ENCODE measurements at regions of chr16 and their contacts with region 1.

Region 1: DNA sequence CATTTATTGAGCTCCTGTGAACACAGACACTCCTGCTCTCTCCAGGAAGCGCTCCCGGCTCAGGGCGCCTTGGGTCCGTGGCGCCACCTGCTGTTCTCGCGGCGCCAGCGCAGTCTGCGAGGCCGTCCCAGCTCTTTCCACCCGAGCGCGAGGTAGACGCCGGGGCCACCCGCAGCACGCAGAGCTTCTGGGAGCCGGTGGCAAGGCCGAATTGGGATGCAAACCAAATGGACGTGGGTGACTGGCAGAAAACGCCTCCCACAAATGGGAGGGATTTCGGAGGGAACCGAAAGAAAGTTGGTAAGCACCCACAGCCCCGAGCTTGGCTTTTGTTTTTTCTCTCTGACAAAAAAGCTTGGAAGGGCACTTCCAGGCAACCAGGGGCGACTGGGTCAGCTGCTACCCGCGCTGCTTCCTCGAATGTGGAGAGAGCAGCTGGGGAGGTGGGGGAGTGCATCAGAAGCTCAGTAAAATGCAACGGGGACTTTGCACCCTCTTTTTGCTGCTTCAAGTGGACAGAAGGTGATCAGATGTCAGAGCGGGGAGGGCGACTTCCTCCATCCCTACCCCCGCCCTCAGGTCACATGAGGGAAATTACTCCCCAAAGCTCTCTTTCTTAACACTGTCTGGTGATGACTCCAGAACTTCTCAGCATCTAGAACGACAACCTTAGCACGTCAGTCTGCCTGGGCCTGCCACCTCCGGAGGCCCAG is 13.5 kb upstream of the N4BP1 start:
- DNase-seq: peak; percentile 79 to 87
- ATAC-seq: peak; percentile 94 to 98 (median 95)
- H3K4me3 ChIP-seq: peak overlapping the region; percentile 9 to 65 (median 52)
- H3K27ac ChIP-seq: peak overlapping the region in 9 of 10 donors; percentile 50 to 89 (median 73)
- H3K4me1 ChIP-seq: peaks cover 2 to 51% (median 36%) of the 10 kb centered on the region in 9 donors
- H3K27me3 ChIP-seq: no peaks in the 10 kb centered on the region
- CTCF ChIP-seq: peak; percentile 97 to 100 (median 99)

Region 2: DNA sequence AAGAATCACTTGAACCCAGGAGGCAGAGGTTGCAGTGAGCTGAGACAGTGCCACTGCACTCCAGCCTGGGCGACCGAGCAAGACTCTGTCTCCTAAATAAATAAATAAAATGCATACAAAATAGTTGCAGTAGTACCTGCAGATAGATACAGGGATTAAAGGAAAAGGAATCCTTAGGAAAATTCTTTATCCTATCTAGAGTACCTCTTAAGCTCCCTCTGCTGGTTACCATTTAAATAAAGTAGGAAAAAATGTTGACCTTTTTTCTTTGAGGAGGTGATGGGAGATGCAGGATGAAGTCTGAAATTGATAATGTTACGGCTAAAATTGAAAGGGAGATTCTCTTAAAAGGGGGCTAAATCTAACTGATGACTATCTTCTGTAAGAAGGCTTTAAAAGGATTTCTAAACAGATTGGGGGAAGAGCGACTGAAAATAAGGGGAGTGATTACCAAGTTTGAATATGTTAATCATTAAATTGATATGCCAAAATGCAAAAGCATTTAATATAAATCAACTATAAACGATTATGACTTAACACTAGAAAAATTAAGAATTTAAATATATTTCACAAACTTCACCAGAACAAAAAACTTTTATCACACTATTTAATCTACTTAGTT is 1821.9 kb before region 1 on chr16:
- intact Hi-C with region 1: no loop called
- DNase-seq: no peak
- ATAC-seq: peak in 3 of 8 donors; percentile 26 to 55 (median 53)
- H3K4me3 ChIP-seq: no peak overlapping the region
- H3K27ac ChIP-seq: no peak overlapping the region
- H3K4me1 ChIP-seq: no peaks in the 10 kb centered on the region
- H3K27me3 ChIP-seq: no peaks in the 10 kb centered on the region
- CTCF ChIP-seq: peak in 8 of 9 donors; percentile 14 to 66 (median 51)

Region 3: GRCh38 chr16:48231727-48232492 is 391.6 kb before region 1 on chr16:
- intact Hi-C with region 1: loop called in 3 of 10 experiments (anchors 10 kb)
- DNase-seq: peak in 1 of 2 donors; percentile 10
- ATAC-seq: peak in 5 of 8 donors; percentile 28 to 61 (median 41)
- H3K4me3 ChIP-seq: no peak overlapping the region
- H3K27ac ChIP-seq: no peak overlapping the region
- H3K4me1 ChIP-seq: peaks cover 0 to 8% (median 0%) of the 10 kb centered on the region in 9 donors
- H3K27me3 ChIP-seq: no peaks in the 10 kb centered on the region
- CTCF ChIP-seq: peak in 7 of 9 donors; percentile 27 to 53 (median 36)

Region 4: DNA sequence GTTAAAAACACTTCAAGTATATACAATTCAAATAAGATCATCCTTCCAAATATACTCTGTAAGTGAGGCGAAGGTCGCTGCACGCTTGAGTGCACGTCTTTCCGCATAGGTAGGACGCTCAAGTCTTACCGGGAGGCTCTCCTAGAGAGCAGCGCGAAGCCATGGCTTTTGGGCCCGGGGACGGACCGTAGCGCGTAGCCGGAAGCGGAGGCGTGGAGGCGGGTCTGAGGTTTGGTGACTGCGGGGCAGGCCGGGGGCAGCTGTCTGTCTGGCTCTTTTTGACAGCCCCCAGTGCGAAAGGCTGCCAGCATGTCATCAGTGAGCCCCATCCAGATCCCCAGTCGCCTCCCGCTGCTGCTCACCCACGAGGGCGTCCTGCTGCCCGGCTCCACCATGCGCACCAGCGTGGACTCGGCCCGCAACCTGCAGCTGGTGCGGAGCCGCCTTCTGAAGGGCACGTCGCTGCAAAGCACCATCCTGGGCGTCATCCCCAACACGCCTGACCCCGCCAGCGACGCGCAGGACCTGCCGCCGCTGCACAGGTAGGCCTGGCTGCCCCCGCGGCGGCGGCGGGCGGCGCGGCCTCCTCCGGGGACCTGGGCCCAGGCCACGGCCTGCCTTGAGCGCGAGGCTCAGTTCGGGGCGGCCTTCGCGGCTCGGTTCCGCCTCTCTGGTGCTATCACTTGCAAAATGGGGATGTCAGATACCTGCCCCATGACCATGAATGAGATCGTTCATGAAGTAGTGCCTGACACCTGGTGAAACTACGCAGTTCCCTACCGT is 379.2 kb before region 1 on chr16 and contains the start of gene LONP2:
- intact Hi-C with region 1: loop called in 6 of 10 experiments (anchors 5 to 10 kb)
- DNase-seq: peak; percentile 93
- ATAC-seq: peak; percentile 99 to 100 (median 100)
- H3K4me3 ChIP-seq: peak within 1 kb of the TSS; percentile 63 to 98 (median 84)
- H3K27ac ChIP-seq: peak within 1 kb of the TSS; percentile 28 to 95 (median 86)
- H3K4me1 ChIP-seq: peaks cover 3 to 51% (median 34%) of the 10 kb centered on the region in 9 donors
- H3K27me3 ChIP-seq: no peaks in the 10 kb centered on the region
- CTCF ChIP-seq: no peak
- total RNA-seq, gene LONP2: 66.2 to 86.6 (median 75.4) TPM

Region 5: DNA sequence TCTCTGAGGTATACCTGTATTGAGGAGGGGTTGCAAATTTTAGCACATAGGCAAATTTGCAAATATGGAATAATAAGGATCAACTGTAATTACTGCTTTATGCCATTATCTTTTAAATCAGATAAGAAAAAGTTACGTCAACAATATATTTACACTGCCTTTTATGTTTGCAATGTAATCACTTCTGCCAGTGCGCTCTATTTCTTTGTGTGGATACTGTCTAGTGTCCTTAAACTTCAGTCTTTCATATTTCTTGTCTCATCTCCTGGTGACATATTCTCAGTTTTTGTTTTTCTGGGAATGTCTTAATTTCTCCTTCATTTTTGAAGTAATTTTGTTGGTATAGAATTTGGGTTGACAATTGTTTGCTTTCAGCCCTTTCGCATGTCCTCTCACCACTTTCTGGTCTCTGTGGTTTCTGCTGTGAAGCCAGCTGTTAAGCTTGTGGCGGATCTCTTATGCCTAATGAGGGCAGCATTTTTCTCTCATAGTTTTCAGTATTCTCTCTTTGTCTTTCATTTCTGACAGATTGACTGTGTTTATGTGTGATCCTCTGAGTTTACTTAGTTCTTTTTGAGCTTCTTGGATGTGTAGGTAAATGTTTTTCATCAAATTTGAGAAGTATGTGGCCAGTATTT is 338.6 kb before region 1 on chr16:
- intact Hi-C with region 1: no loop called
- DNase-seq: no peak
- ATAC-seq: no peak
- H3K4me3 ChIP-seq: no peak overlapping the region
- H3K27ac ChIP-seq: no peak overlapping the region
- H3K4me1 ChIP-seq: peaks cover 5 to 39% (median 31%) of the 10 kb centered on the region in 9 donors
- H3K27me3 ChIP-seq: no peaks in the 10 kb centered on the region
- CTCF ChIP-seq: no peak

Region 6: DNA sequence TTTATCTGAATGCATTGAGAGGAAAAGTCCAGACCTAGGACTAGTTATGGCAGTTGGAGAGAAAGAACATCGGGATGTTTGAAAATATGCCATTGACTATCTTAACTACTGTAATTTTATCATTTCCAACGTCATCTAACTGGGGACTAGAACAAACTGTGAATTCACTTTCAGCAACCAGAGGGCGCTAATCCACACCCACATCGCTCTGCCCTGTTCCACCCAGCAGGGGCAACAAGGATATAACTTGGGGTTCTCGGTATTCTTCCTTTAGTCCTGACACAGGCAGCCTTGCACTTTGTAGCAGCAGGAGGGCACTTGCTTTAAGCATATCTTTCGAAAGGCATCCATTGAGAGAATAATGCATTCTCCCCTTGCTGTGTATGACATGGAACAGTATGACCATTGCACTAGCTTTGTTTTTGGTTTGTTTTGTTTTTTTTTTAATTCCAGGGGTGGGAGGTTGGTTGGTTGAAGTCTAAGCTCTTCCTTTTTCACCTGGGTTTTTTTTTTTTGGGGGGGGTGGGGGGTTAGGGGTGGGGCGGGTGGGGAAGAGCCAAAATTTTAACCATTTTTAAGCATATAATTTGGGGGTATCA is 269.8 kb before region 1 on chr16:
- intact Hi-C with region 1: loop called in 9 of 10 experiments (anchors 1 to 10 kb)
- DNase-seq: peak in 1 of 2 donors; percentile 61
- ATAC-seq: peak; percentile 73 to 87 (median 85)
- H3K4me3 ChIP-seq: no peak overlapping the region
- H3K27ac ChIP-seq: no peak overlapping the region
- H3K4me1 ChIP-seq: peaks cover 0 to 30% (median 9%) of the 10 kb centered on the region in 9 donors
- H3K27me3 ChIP-seq: no peaks in the 10 kb centered on the region
- CTCF ChIP-seq: peak; percentile 72 to 91 (median 87)

Region 7: GRCh38 chr16:48365581-48366164 is 257.8 kb before region 1 on chr16:
- intact Hi-C with region 1: loop called in 1 of 10 experiments (anchors 5 kb)
- DNase-seq: peak; percentile 91
- ATAC-seq: peak; percentile 98 to 100 (median 99)
- H3K4me3 ChIP-seq: peak overlapping the region; percentile 29 to 71 (median 63)
- H3K27ac ChIP-seq: peak overlapping the region; percentile 5 to 88 (median 79)
- H3K4me1 ChIP-seq: peaks cover 7 to 71% (median 49%) of the 10 kb centered on the region in 9 donors
- H3K27me3 ChIP-seq: no peaks in the 10 kb centered on the region
- CTCF ChIP-seq: peak in 4 of 9 donors; percentile 7 to 34 (median 26)

Region 8: GRCh38 chr16:48524348-48525200 is 98.9 kb before region 1 on chr16:
- intact Hi-C with region 1: no loop called
- DNase-seq: no peak
- ATAC-seq: no peak
- H3K4me3 ChIP-seq: no peak overlapping the region
- H3K27ac ChIP-seq: no peak overlapping the region
- H3K4me1 ChIP-seq: no peaks in the 10 kb centered on the region
- H3K27me3 ChIP-seq: no peaks in the 10 kb centered on the region
- CTCF ChIP-seq: no peak

Region 9: DNA sequence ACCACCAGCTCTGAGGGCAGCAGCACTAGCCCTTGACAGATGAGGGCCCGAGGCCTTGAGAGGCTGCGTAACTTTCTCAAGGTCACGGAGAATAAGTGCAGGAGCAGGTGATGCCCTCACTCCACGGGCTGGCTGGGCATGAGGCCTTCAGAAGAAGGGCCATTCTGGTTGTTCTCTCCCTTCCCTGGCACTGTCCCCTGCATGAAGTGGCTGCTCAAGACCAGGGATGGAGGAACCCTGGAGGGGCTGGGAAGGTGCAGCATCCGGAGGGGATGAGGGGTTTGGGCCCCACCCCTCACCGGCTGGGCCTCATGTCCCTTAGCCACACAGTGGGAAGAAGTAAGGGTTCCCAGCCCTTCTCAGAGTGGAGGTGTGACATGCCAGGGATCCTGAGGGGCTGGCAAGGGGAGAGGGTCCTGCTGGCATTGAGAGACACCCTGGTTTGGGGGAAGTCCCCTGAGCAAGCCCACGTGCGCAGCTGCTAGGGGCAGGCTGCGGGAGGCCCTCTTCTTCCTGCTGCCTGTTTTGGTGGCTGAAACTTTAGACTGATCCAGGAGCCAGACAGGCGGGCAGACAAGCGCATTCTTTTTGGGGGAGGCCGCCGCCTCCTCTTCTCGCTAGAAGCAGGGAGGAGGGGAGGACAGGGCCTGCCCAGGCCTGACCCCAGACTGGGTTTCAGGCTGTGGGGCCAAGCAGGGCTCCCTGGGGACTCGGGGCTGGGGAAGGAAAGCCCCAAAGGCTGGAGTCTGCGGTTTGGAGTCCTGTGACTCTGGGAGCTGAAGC is 87.4 kb before region 1 on chr16:
- intact Hi-C with region 1: loop called in 9 of 10 experiments (anchors 5 kb)
- DNase-seq: peak; percentile 50 to 75
- ATAC-seq: peak; percentile 30 to 70 (median 52)
- H3K4me3 ChIP-seq: no peak overlapping the region
- H3K27ac ChIP-seq: peak overlapping the region; percentile 52 to 85 (median 73)
- H3K4me1 ChIP-seq: peaks cover 26 to 58% (median 41%) of the 10 kb centered on the region in 9 donors
- H3K27me3 ChIP-seq: no peaks in the 10 kb centered on the region
- CTCF ChIP-seq: no peak

Region 10: GRCh38 chr16:48556913-48557351 is 66.5 kb before region 1 on chr16:
- intact Hi-C with region 1: loop called in 2 of 10 experiments (anchors 5 kb)
- DNase-seq: no peak
- ATAC-seq: peak in 3 of 8 donors; percentile 20 to 46 (median 20)
- H3K4me3 ChIP-seq: no peak overlapping the region
- H3K27ac ChIP-seq: peak overlapping the region in 3 of 10 donors; percentile 15 to 65 (median 22)
- H3K4me1 ChIP-seq: peaks cover 16 to 99% (median 83%) of the 10 kb centered on the region in 9 donors
- H3K27me3 ChIP-seq: no peaks in the 10 kb centered on the region
- CTCF ChIP-seq: no peak

Measured in heart right ventricle (tissue), 16 donors.